ENCODE measurements at regions of chr15 and their contacts with region 1.

Region 1: GRCh38 chr15:44536962-44537734 is at the start of gene EIF3J:
- DNase-seq: peak; percentile 95
- H3K4me3 Mint-ChIP-seq: peak within 1 kb of the TSS; percentile 93
- H3K27ac Mint-ChIP-seq: peak within 1 kb of the TSS; percentile 98
- H3K4me1 Mint-ChIP-seq: peaks cover 52% of the 10 kb centered on the region
- H3K27me3 Mint-ChIP-seq: no peaks in the 10 kb centered on the region
- total RNA-seq, gene EIF3J: 163 and 168 TPM in 2 replicates

Region 2: DNA sequence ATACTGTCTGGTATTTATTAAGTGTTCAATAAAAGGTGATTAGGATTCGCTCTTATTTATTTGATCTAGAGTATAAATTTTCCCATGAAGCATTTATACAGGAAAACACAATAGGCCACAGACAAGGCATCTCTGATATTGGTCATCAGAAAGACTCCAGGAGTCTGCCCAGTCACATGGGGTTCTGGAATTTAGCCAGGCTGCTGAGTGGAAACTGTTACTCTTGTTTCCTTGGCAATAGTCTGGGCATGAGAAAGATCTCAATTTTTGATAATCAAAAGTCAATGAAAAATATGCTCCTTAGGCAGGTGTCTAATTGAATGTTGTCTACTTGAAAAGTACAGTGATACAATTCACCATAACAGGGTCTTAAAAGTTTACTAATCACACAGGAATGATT is 503.3 kb before region 1 on chr15:
- intact Hi-C with region 1: no loop called
- DNase-seq: no peak
- H3K4me3 Mint-ChIP-seq: no peak overlapping the region
- H3K27ac Mint-ChIP-seq: no peak overlapping the region
- H3K4me1 Mint-ChIP-seq: no peaks in the 10 kb centered on the region
- H3K27me3 Mint-ChIP-seq: peaks cover 2% of the 10 kb centered on the region

Region 3: DNA sequence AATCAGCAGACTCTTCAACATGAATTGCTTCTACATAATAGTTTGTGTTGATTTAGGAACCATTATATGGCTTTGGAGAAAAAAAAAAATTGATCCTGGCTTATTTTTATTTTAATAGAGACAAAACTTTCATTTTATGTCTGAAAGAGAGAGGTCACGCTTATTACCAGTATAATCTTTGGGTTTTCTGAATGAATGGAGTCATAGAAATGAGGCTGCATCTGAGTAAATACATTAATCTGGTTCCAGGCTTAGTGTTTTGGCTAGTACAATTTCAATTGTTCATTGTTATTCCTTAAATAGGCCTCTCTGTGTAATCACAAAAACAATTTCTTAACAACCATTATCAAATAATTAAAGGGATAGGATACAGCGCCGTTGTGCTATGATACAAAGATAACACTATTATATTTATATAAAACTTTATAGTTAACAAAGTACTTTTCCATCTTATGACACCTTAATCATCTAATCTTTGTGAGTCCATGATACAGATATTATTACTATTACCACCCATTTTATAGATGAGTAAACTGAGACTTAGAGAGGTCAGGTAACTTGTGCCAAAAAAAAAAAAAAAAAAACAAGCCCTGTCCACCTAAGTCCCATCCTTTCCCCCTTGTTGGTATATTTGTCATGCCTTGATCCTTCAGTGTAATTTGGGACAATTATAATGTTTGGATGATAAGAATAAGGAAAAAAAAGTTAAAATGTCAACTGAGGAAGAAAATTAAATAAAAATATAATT is 290.5 kb before region 1 on chr15:
- intact Hi-C with region 1: no loop called
- DNase-seq: no peak
- H3K4me3 Mint-ChIP-seq: no peak overlapping the region
- H3K27ac Mint-ChIP-seq: no peak overlapping the region
- H3K4me1 Mint-ChIP-seq: no peaks in the 10 kb centered on the region
- H3K27me3 Mint-ChIP-seq: peaks cover 4% of the 10 kb centered on the region

Region 4: DNA sequence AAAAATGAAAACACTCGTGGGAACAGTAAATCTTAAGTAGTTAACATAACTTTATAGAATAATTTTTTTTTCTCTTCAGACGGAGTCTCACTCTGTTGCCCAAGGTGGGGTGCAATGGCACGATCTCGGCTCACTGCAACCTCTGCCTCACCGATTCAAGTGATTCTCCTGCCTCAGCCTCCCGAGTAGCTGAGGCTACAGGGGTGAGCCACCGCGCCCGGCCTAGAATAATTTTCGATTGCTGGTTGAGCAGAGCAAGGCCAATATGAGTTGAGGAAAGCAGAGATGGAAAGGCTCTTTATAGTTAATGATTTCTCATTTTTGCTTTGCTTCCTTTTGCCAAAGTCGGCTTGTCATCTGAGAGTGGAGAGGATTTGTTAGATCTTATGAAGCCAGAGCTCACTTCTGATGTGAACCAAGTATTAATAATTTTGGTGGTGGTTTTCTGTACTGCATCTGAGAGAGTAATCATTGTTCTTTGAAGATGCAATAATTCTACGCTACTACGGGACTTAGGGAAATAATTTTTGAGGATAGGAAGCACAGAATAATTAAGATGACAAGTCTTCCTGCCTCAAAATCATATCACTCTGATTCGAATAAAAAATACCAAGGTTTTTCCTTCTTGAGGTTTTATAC is 250.2 kb before region 1 on chr15:
- intact Hi-C with region 1: loop called (anchors 1 kb)
- DNase-seq: no peak
- H3K4me3 Mint-ChIP-seq: peak overlapping the region; percentile 92
- H3K27ac Mint-ChIP-seq: peak overlapping the region; percentile 100
- H3K4me1 Mint-ChIP-seq: peaks cover 44% of the 10 kb centered on the region
- H3K27me3 Mint-ChIP-seq: peaks cover 9% of the 10 kb centered on the region

Region 5: DNA sequence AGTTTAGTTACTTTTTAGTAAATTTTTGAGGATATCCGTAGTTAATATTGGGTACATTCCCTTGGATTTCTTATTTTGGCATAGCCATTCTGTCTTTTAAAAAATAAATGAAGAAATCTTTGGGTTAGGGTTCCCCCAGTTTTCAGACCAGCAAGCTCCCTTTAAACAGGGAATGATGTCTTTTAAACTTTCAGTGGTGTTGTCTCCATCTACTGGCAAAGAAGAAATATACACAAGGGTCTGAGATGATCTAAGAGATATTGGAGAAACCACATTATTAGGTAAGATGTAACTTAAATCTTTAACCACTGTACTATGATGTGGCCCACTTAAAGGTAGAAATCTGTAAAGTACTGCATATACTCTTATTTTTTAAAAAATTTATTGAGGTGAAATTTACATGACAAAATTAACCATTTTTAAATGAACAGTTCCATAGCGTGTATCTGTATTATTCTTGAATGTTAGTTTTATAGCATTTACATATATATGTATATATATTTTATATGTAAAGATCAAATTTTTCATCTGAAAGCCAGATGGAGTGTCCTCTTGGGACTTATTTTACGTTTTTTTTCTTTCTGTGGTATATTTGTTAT is 35.3 kb before region 1 on chr15:
- intact Hi-C with region 1: loop called (anchors 5 kb)
- DNase-seq: no peak
- H3K4me3 Mint-ChIP-seq: no peak overlapping the region
- H3K27ac Mint-ChIP-seq: no peak overlapping the region
- H3K4me1 Mint-ChIP-seq: peaks cover 22% of the 10 kb centered on the region
- H3K27me3 Mint-ChIP-seq: no peaks in the 10 kb centered on the region

Region 6: DNA sequence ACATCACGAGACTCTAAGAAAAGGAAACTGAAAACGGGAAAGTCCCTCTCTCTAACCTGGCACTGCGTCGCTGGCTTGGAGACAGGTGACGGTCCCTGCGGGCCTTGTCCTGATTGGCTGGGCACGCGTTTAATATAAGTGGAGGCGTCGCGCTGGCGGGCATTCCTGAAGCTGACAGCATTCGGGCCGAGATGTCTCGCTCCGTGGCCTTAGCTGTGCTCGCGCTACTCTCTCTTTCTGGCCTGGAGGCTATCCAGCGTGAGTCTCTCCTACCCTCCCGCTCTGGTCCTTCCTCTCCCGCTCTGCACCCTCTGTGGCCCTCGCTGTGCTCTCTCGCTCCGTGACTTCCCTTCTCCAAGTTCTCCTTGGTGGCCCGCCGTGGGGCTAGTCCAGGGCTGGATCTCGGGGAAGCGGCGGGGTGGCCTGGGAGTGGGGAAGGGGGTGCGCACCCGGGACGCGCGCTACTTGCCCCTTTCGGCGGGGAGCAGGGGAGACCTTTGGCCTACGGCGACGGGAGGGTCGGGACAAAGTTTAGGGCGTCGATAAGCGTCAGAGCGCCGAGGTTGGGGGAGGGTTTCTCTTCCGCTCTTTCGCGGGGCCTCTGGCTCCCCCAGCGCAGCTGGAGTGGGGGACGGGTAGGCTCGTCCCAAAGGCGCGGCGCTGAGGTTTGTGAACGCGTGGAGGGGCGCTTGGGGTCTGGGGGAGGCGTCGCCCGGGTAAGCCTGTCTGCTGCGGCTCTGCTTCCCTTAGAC is 174.4 kb after region 1 on chr15 and contains the start of gene B2M:
- intact Hi-C with region 1: loop called (anchors 5 kb)
- DNase-seq: peak; percentile 95
- H3K4me3 Mint-ChIP-seq: peak within 1 kb of the TSS; percentile 99
- H3K27ac Mint-ChIP-seq: peak within 1 kb of the TSS; percentile 99
- H3K4me1 Mint-ChIP-seq: peaks cover 49% of the 10 kb centered on the region
- H3K27me3 Mint-ChIP-seq: no peaks in the 10 kb centered on the region
- total RNA-seq, gene B2M: 4,313 and 4,559 TPM in 2 replicates

Region 7: GRCh38 chr15:44728576-44729407 is 191.6 kb after region 1 on chr15:
- intact Hi-C with region 1: loop called (anchors 1 kb)
- DNase-seq: peak; percentile 96
- H3K4me3 Mint-ChIP-seq: peak overlapping the region; percentile 100
- H3K27ac Mint-ChIP-seq: peak overlapping the region; percentile 99
- H3K4me1 Mint-ChIP-seq: peaks cover 77% of the 10 kb centered on the region
- H3K27me3 Mint-ChIP-seq: no peaks in the 10 kb centered on the region

Measured in activated T-helper 1 cell treated with anti-CD3 and anti-CD28 coated beads, Interleukin-12 subunit alpha, Interleukin-12 subunit beta, Interleukin-2, Interleukin-4 antibody, amounts not matched to agents 30 ng/mL and 10 ng/mL and 1 ng/mL, durations not matched to agents 14 hours and 24 hours and 36 hours (primary cell).